ENCODE measurements at regions of chr4 and their contacts with region 1.

Region 1: GRCh38 chr4:76960014-76960413 is 10.5 kb downstream of the SEPTIN11 start:
- DNase-seq: no peak
- H3K4me3 ChIP-seq: no peak overlapping the region
- CTCF ChIP-seq: no peak

Region 2: DNA sequence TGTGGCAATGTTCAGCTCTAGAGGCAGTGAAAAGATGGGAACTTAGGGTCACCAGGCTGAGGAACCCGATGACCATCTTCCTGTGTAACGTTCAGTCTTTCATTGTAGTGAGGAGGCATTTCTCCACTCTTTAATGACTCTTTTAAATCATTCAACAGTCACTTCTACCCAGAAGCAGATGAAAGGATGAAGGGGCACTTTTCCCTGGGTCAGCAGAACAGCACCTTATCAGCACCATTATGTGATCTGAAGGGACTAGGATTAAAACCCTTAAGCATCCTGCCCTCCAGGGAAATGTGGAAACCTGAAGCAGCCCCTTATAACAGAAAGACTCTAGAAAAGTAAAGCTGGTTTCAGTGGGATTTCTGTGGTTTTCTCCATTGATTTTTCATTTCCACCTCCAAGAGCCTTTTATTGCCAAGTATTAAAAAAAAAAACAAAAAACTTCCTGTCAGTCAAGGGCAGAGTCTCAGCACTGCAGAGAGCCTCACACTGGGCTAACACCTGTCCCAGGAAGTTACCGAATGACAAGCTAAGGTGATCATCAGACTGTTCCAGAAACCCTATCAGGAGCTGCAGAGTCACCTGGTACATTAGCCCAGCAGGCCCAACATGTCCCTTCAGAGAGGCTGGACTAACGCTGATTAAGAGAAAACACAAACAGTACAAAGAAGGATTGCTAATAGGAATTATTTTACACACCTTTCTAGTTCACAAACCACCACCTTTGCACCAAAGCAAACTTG is 339.1 kb before region 1 on chr4:
- CTCF ChIA-PET with region 1: no interaction called
- POLR2A ChIA-PET with region 1: no interaction called
- DNase-seq: no peak
- H3K4me3 ChIP-seq: no peak overlapping the region
- CTCF ChIP-seq: no peak

Region 3: DNA sequence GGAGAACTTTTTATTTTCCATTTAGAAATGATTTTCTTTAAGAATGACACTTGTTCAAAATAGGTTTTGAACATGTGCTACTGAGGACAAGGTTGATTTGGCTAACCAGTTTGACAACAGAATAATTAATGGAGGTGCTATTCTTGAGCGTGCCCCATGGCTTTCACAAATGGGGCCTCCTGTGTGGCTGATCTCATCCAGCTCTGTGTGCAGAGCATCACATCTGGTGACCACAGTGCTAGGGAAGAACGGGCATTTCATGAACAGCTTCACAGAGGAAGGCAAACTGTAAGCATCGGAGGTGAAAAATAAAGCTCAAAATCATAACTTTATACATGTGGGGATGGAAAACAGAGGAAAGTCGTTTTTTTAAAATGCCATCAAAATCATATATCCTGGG is 210.7 kb before region 1 on chr4:
- CTCF ChIA-PET with region 1: no interaction called
- POLR2A ChIA-PET with region 1: no interaction called
- DNase-seq: no peak
- H3K4me3 ChIP-seq: no peak overlapping the region
- CTCF ChIP-seq: no peak

Region 4: GRCh38 chr4:77044461-77045150 is 84.6 kb after region 1 on chr4:
- CTCF ChIA-PET with region 1: interaction called, 13 read pairs
- POLR2A ChIA-PET with region 1: no interaction called
- DNase-seq: no peak
- H3K4me3 ChIP-seq: no peak overlapping the region
- CTCF ChIP-seq: peak; percentile 26

Region 5: GRCh38 chr4:77156533-77156911 is 196.5 kb after region 1 on chr4:
- CTCF ChIA-PET with region 1: no interaction called
- POLR2A ChIA-PET with region 1: no interaction called
- DNase-seq: peak; percentile 98
- H3K4me3 ChIP-seq: peak overlapping the region; percentile 96
- CTCF ChIP-seq: no peak

Measured in AG04449 (cell line).